PC-3 (cell line): ENCODE measurements at regions of chr9 and their contacts with region 1.

Region 1: GRCh38 chr9:97749928-97750327 is 52.8 kb upstream of the XPA start:
- DNase-seq: peak; percentile 29
- ATAC-seq: peak; percentile 80
- H3K4me3 ChIP-seq: no peak overlapping the region
- H3K27ac ChIP-seq: no peak overlapping the region
- H3K4me1 ChIP-seq: no peaks in the 10 kb centered on the region
- H3K27me3 ChIP-seq: no peaks in the 10 kb centered on the region
- CTCF ChIP-seq: peak; percentile 46

Region 2: GRCh38 chr9:97900738-97901565 is 151.0 kb after region 1 on chr9:
- CTCF ChIA-PET with region 1: interaction called, 7 read pairs
- POLR2A ChIA-PET with region 1: no interaction called
- intact Hi-C with region 1: loop called (anchors 2 kb)
- DNase-seq: peak; percentile 59
- ATAC-seq: peak; percentile 37
- H3K4me3 ChIP-seq: no peak overlapping the region
- H3K27ac ChIP-seq: no peak overlapping the region
- H3K4me1 ChIP-seq: peaks cover 7% of the 10 kb centered on the region
- H3K27me3 ChIP-seq: no peaks in the 10 kb centered on the region
- CTCF ChIP-seq: peak; percentile 81